Naive thymus-derived CD4-positive, alpha-beta T cell (primary cell): ENCODE measurements at regions of chr19 and their contacts with region 1.

Region 1: GRCh38 chr19:17859533-17860330 is at the start of gene RPL18A:
- DNase-seq: peak; percentile 83 to 100 (median 98)
- ATAC-seq: peak; percentile 97
- H3K4me3 ChIP-seq: peak within 1 kb of the TSS; percentile 96
- H3K4me3 Mint-ChIP-seq: peak within 1 kb of the TSS; percentile 95 to 100 (median 98)
- H3K27ac ChIP-seq: peak within 1 kb of the TSS; percentile 84
- H3K27ac Mint-ChIP-seq: peak within 1 kb of the TSS; percentile 93 to 99 (median 98)
- H3K4me1 ChIP-seq: peaks cover 18 to 19% of the 10 kb centered on the region in 2 donors
- H3K4me1 Mint-ChIP-seq: peaks cover 17 to 48% (median 33%) of the 10 kb centered on the region in 7 donors
- H3K27me3 ChIP-seq: no peaks in the 10 kb centered on the region
- H3K27me3 Mint-ChIP-seq: peaks cover 0 to 5% (median 0%) of the 10 kb centered on the region in 5 donors
- total RNA-seq, gene RPL18A: 2,413 to 3,932 (median 3,224) TPM

Region 2: DNA sequence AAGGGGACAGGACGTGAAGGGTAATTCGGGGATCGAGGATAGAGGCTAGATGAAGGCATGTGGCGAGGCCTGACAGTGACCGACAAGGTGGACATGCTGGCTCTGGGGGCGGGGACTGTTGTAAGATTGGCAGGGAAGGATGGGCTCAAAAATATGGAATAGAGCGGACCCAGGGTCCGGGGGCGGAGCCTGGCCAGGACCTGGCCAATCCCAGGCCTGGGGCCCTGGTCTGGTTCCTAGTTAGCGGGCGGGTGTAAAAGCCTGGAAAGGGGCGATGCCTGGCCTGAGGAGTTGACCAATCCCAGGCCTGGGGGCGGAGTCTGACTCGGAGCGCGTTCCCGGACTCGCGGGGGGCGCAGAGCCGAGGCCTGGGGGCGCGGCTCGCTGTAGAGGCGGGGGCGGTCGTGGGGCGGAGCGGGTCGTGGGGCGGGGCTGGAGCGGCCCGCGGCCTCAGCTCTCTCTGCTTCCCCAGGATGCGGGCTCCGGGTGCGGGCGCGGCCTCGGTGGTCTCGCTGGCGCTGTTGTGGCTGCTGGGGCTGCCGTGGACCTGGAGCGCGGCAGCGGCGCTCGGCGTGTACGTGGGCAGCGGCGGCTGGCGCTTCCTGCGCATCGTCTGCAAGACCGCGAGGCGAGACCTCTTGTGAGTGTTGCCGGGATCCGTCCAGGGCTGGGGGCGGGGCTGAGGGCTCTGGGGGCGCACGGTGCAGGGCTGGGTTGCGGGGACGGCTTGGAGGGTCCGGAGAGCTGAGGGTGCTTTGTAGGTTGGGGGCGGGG is 389.5 kb before region 1 on chr19 and contains the start of gene SLC27A1:
- CTCF ChIA-PET with region 1: no interaction called
- POLR2A ChIA-PET with region 1: no interaction called
- intact Hi-C with region 1: loop called in 1 of 2 experiments (anchors 10 kb)
- DNase-seq: peak; percentile 76 to 90 (median 84)
- ATAC-seq: peak; percentile 84
- H3K4me3 ChIP-seq: peak within 1 kb of the TSS; percentile 96
- H3K4me3 Mint-ChIP-seq: peak within 1 kb of the TSS; percentile 92 to 100 (median 96)
- H3K27ac ChIP-seq: peak within 1 kb of the TSS; percentile 77
- H3K27ac Mint-ChIP-seq: peak within 1 kb of the TSS; percentile 74 to 98 (median 93)
- H3K4me1 ChIP-seq: peaks cover 6 to 22% of the 10 kb centered on the region in 2 donors
- H3K4me1 Mint-ChIP-seq: peaks cover 22 to 38% (median 30%) of the 10 kb centered on the region in 7 donors
- H3K27me3 ChIP-seq: no peaks in the 10 kb centered on the region
- H3K27me3 Mint-ChIP-seq: peaks cover 0 to 22% (median 0%) of the 10 kb centered on the region in 5 donors
- total RNA-seq, gene SLC27A1: 3.1 to 15.1 (median 11.0) TPM

Region 3: GRCh38 chr19:17605761-17606745 is 253.7 kb before region 1 on chr19:
- CTCF ChIA-PET with region 1: interaction called, 4 read pairs
- POLR2A ChIA-PET with region 1: no interaction called
- intact Hi-C with region 1: loop called in 1 of 2 experiments (anchors 1 kb)
- DNase-seq: peak; percentile 72 to 93 (median 87)
- ATAC-seq: peak; percentile 96
- H3K4me3 ChIP-seq: peak overlapping the region; percentile 63
- H3K4me3 Mint-ChIP-seq: peak overlapping the region; percentile 64 to 91 (median 81)
- H3K27ac ChIP-seq: peak overlapping the region; percentile 48
- H3K27ac Mint-ChIP-seq: peak overlapping the region in 7 of 9 donors; percentile 63 to 84 (median 74)
- H3K4me1 ChIP-seq: peaks cover 2 to 7% of the 10 kb centered on the region in 2 donors
- H3K4me1 Mint-ChIP-seq: peaks cover 0 to 14% (median 10%) of the 10 kb centered on the region in 7 donors
- H3K27me3 ChIP-seq: no peaks in the 10 kb centered on the region
- H3K27me3 Mint-ChIP-seq: peaks cover 29 to 45% (median 33%) of the 10 kb centered on the region in 5 donors

Region 4: GRCh38 chr19:17766543-17767131 is 93.1 kb before region 1 on chr19:
- CTCF ChIA-PET with region 1: interaction called, 3 read pairs
- POLR2A ChIA-PET with region 1: no interaction called
- intact Hi-C with region 1: loop called in 1 of 2 experiments (anchors 1 kb)
- DNase-seq: peak in 4 of 9 donors; percentile 34 to 57 (median 45)
- ATAC-seq: peak; percentile 59
- H3K4me3 ChIP-seq: no peak overlapping the region
- H3K4me3 Mint-ChIP-seq: peak overlapping the region in 2 of 10 donors; percentile 12 to 47
- H3K27ac ChIP-seq: no peak overlapping the region
- H3K27ac Mint-ChIP-seq: peak overlapping the region in 2 of 9 donors; percentile 36 to 63
- H3K4me1 ChIP-seq: no peaks in the 10 kb centered on the region
- H3K4me1 Mint-ChIP-seq: peaks cover 0 to 10% (median 3%) of the 10 kb centered on the region in 7 donors
- H3K27me3 ChIP-seq: no peaks in the 10 kb centered on the region
- H3K27me3 Mint-ChIP-seq: no peaks in the 10 kb centered on the region

Region 5: DNA sequence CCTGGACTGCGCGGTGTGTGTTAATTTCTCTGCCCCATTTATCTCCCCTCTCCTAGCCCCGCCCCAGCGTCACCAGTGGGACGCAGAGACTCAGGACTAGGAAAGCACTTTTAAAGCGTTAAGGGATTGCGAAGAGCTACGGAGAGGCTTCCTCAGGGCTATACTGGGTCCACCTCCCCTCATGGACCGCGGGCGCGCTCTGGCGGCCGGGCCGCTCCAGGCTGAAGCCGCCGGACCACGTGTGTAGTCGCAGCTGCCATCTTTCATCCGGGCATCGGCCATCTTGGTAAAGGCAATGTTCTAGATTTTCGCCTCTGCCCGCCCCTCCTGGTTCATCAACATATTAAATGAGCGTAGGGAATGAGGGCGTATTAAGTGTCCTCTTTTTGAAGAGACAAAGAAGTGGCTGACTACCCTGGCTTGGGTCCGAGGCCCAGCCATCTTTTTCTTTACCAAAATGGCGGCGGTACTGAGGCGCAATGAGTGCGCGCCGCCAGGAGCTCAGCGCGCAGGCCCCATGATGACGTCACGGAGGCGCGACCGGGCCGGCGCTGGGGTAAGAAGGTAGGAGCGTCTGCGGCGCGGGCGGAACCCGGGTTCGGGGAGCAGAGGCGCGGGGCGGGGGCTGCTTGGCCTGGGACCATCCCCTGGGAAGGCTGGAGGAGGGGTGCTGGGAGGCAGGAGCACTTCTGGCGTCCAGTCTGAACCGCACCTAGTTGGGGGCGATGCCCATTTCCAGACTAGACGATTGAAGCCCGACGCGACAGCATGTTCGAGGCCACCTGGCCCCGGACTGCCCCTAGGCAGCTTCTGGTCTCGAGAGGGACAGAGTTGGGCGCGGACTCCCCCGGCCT is 73.0 kb after region 1 on chr19 and contains the start of gene CCDC124:
- CTCF ChIA-PET with region 1: interaction called, 124 read pairs
- POLR2A ChIA-PET with region 1: interaction called, 117 read pairs
- intact Hi-C with region 1: loop called (anchors 1 kb)
- DNase-seq: peak; percentile 89 to 96 (median 94)
- ATAC-seq: peak; percentile 99
- H3K4me3 ChIP-seq: peak within 1 kb of the TSS; percentile 69
- H3K4me3 Mint-ChIP-seq: peak within 1 kb of the TSS; percentile 85 to 97 (median 93)
- H3K27ac ChIP-seq: peak within 1 kb of the TSS; percentile 86
- H3K27ac Mint-ChIP-seq: peak within 1 kb of the TSS; percentile 90 to 97 (median 95)
- H3K4me1 ChIP-seq: peaks cover 10 to 11% of the 10 kb centered on the region in 2 donors
- H3K4me1 Mint-ChIP-seq: peaks cover 6 to 24% (median 15%) of the 10 kb centered on the region in 7 donors
- H3K27me3 ChIP-seq: no peaks in the 10 kb centered on the region
- H3K27me3 Mint-ChIP-seq: peaks cover 0 to 2% (median 0%) of the 10 kb centered on the region in 5 donors
- total RNA-seq, gene CCDC124: 28.7 to 60.5 (median 32.6) TPM

Region 6: GRCh38 chr19:18152444-18152816 is 292.7 kb after region 1 on chr19:
- CTCF ChIA-PET with region 1: no interaction called
- POLR2A ChIA-PET with region 1: interaction called, 4 read pairs
- intact Hi-C with region 1: loop called in 1 of 2 experiments (anchors 1 kb)
- DNase-seq: peak; percentile 92 to 99 (median 97)
- ATAC-seq: peak; percentile 76
- H3K4me3 ChIP-seq: peak overlapping the region; percentile 82
- H3K4me3 Mint-ChIP-seq: peak overlapping the region; percentile 81 to 95 (median 88)
- H3K27ac ChIP-seq: peak overlapping the region; percentile 88
- H3K27ac Mint-ChIP-seq: peak overlapping the region; percentile 89 to 97 (median 95)
- H3K4me1 ChIP-seq: peaks cover 16 to 20% of the 10 kb centered on the region in 2 donors
- H3K4me1 Mint-ChIP-seq: peaks cover 9 to 32% (median 24%) of the 10 kb centered on the region in 7 donors
- H3K27me3 ChIP-seq: no peaks in the 10 kb centered on the region
- H3K27me3 Mint-ChIP-seq: no peaks in the 10 kb centered on the region